ENCODE measurements at regions of chr20 and their contacts with region 1.

Region 1: GRCh38 chr20:18566892-18567742 is at the start of gene SMIM26:
- DNase-seq: peak; percentile 88 to 97 (median 95)
- ATAC-seq: peak; percentile 98
- H3K4me3 ChIP-seq: peak within 1 kb of the TSS; percentile 54 to 90
- H3K4me3 Mint-ChIP-seq: peak within 1 kb of the TSS; percentile 96
- H3K27ac ChIP-seq: peak within 1 kb of the TSS; percentile 79 to 94
- H3K27ac Mint-ChIP-seq: peak within 1 kb of the TSS; percentile 99
- H3K4me1 ChIP-seq: peaks cover 14% of the 10 kb centered on the region
- H3K4me1 Mint-ChIP-seq: peaks cover 22% of the 10 kb centered on the region
- H3K27me3 ChIP-seq: no peaks in the 10 kb centered on the region
- H3K27me3 Mint-ChIP-seq: no peaks in the 10 kb centered on the region
- CTCF ChIP-seq: no peak
- total RNA-seq, gene SMIM26: 63.9 to 64.8 TPM

Region 2: GRCh38 chr20:18466894-18467730 is 100.0 kb before region 1 on chr20 and contains the starts of genes DZANK1 and POLR3F:
- CTCF ChIA-PET with region 1: no interaction called
- POLR2A ChIA-PET with region 1: no interaction called
- intact Hi-C with region 1: loop called (anchors 1 to 2 kb)
- DNase-seq: peak; percentile 84 to 95 (median 93)
- ATAC-seq: peak; percentile 90
- H3K4me3 ChIP-seq: peak within 1 kb of the TSS; percentile 79 to 93
- H3K4me3 Mint-ChIP-seq: peak within 1 kb of the TSS; percentile 97
- H3K27ac ChIP-seq: peak within 1 kb of the TSS; percentile 73 to 92
- H3K27ac Mint-ChIP-seq: peak within 1 kb of the TSS; percentile 97
- H3K4me1 ChIP-seq: peaks cover 16% of the 10 kb centered on the region
- H3K4me1 Mint-ChIP-seq: peaks cover 24% of the 10 kb centered on the region
- H3K27me3 ChIP-seq: no peaks in the 10 kb centered on the region
- H3K27me3 Mint-ChIP-seq: no peaks in the 10 kb centered on the region
- CTCF ChIP-seq: no peak
- total RNA-seq, gene DZANK1: 2.0 to 2.3 TPM
- total RNA-seq, gene POLR3F: 11.5 TPM

Region 3: GRCh38 chr20:18507218-18508021 is 59.7 kb before region 1 on chr20 and contains the start of gene SEC23B:
- CTCF ChIA-PET with region 1: interaction called, 3 read pairs
- POLR2A ChIA-PET with region 1: interaction called, 15 read pairs
- intact Hi-C with region 1: loop called (anchors 1 kb)
- DNase-seq: peak; percentile 96 to 100 (median 98)
- ATAC-seq: peak; percentile 82
- H3K4me3 ChIP-seq: peak within 1 kb of the TSS; percentile 63 to 87
- H3K4me3 Mint-ChIP-seq: peak within 1 kb of the TSS; percentile 100
- H3K27ac ChIP-seq: peak within 1 kb of the TSS; percentile 97 to 100
- H3K27ac Mint-ChIP-seq: peak within 1 kb of the TSS; percentile 100
- H3K4me1 ChIP-seq: peaks cover 17% of the 10 kb centered on the region
- H3K4me1 Mint-ChIP-seq: peaks cover 47% of the 10 kb centered on the region
- H3K27me3 ChIP-seq: no peaks in the 10 kb centered on the region
- H3K27me3 Mint-ChIP-seq: no peaks in the 10 kb centered on the region
- CTCF ChIP-seq: no peak
- total RNA-seq, gene SEC23B: 31.5 to 31.8 TPM

Region 4: DNA sequence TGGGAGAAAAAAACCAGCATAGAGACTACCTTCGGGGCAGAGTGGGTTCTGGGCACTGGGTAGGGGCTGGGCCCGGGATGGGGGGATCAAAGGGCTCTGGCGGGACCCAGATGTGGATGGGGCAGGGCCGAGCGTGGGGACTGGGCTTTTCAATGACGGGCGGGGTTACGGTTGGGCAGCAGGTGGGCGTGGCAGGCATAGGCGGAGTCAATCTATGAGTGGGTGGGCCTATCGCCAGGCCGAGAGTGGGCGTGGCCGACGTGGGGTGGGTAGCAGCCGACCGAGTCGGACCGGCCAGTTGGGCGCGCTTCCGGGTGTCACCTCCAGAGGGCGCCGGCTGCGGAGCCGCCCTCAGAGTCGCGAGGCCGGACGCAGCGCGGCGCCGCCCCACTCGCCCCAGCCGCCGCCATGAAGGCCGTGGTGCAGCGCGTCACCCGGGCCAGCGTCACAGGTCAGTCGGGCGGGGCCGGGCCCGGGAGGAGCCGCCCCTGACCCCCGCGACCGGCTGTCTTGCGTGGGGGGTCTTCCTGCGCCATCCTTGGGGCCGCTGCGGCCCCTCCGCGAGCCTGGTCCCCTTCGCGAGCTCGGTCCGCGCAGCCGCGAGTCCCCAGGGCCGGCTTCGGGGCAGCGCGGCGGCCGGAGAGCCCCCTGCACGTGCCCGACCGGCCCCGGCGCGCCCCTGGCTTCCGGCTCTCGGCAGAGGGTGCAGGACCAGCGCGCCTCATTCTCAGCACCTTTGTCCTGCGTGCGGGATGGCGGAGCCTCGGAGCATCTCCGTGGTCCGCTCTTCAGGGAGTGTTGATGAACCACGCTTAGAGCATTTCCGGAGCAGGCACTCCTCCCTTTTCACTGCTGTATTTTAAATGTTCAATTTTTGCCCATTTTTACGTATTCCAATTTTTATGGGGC is 20.8 kb after region 1 on chr20 and contains the start of gene DTD1:
- CTCF ChIA-PET with region 1: interaction called, 3 read pairs
- POLR2A ChIA-PET with region 1: interaction called, 4 read pairs
- intact Hi-C with region 1: loop called (anchors 1 to 2 kb)
- DNase-seq: peak; percentile 53 to 89 (median 82)
- ATAC-seq: peak; percentile 82
- H3K4me3 ChIP-seq: peak within 1 kb of the TSS; percentile 65 to 83
- H3K4me3 Mint-ChIP-seq: peak within 1 kb of the TSS; percentile 95
- H3K27ac ChIP-seq: peak within 1 kb of the TSS; percentile 56 to 83
- H3K27ac Mint-ChIP-seq: peak within 1 kb of the TSS; percentile 94
- H3K4me1 ChIP-seq: peaks cover 18% of the 10 kb centered on the region
- H3K4me1 Mint-ChIP-seq: peaks cover 32% of the 10 kb centered on the region
- H3K27me3 ChIP-seq: no peaks in the 10 kb centered on the region
- H3K27me3 Mint-ChIP-seq: peaks cover 6% of the 10 kb centered on the region
- CTCF ChIP-seq: peak; percentile 45
- total RNA-seq, gene DTD1: 12.5 to 14.5 TPM

Region 5: DNA sequence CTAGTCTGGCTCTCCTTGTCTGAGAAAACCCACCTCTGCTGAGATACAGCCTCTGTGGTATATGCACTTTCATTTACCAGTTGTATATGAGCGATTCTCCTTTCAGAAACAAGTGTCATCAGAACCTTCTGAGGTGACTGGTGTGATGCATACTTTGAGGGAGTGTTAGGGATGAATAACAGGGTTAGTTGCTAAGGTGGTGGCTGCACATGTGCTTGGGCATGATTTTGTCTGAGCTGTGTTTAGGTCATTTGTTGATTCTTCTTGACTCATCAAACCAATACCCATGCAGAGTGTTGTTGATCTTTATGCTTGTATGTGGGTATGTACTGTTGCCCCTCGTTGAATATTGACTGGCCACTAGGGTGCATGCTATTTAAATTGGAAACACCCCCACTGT is 46.4 kb after region 1 on chr20:
- CTCF ChIA-PET with region 1: no interaction called
- POLR2A ChIA-PET with region 1: no interaction called
- intact Hi-C with region 1: no loop called
- DNase-seq: no peak
- ATAC-seq: no peak
- H3K4me3 ChIP-seq: no peak overlapping the region
- H3K4me3 Mint-ChIP-seq: no peak overlapping the region
- H3K27ac ChIP-seq: no peak overlapping the region
- H3K27ac Mint-ChIP-seq: no peak overlapping the region
- H3K4me1 ChIP-seq: no peaks in the 10 kb centered on the region
- H3K4me1 Mint-ChIP-seq: peaks cover 5% of the 10 kb centered on the region
- H3K27me3 ChIP-seq: no peaks in the 10 kb centered on the region
- H3K27me3 Mint-ChIP-seq: no peaks in the 10 kb centered on the region
- CTCF ChIP-seq: no peak

Region 6: GRCh38 chr20:20017001-20017843 is 1450.1 kb after region 1 on chr20 and contains the start of gene NAA20:
- CTCF ChIA-PET with region 1: no interaction called
- POLR2A ChIA-PET with region 1: no interaction called
- intact Hi-C with region 1: loop called in 1 of 2 experiments (anchors 5 kb)
- DNase-seq: peak; percentile 75 to 94 (median 91)
- ATAC-seq: peak; percentile 94
- H3K4me3 ChIP-seq: peak within 1 kb of the TSS; percentile 77 to 89
- H3K4me3 Mint-ChIP-seq: peak within 1 kb of the TSS; percentile 91
- H3K27ac ChIP-seq: peak within 1 kb of the TSS; percentile 63 to 82
- H3K27ac Mint-ChIP-seq: peak within 1 kb of the TSS; percentile 91
- H3K4me1 ChIP-seq: peaks cover 44% of the 10 kb centered on the region
- H3K4me1 Mint-ChIP-seq: peaks cover 53% of the 10 kb centered on the region
- H3K27me3 ChIP-seq: no peaks in the 10 kb centered on the region
- H3K27me3 Mint-ChIP-seq: no peaks in the 10 kb centered on the region
- CTCF ChIP-seq: peak; percentile 58
- total RNA-seq, gene NAA20: 32.9 to 33.2 TPM

Region 7: DNA sequence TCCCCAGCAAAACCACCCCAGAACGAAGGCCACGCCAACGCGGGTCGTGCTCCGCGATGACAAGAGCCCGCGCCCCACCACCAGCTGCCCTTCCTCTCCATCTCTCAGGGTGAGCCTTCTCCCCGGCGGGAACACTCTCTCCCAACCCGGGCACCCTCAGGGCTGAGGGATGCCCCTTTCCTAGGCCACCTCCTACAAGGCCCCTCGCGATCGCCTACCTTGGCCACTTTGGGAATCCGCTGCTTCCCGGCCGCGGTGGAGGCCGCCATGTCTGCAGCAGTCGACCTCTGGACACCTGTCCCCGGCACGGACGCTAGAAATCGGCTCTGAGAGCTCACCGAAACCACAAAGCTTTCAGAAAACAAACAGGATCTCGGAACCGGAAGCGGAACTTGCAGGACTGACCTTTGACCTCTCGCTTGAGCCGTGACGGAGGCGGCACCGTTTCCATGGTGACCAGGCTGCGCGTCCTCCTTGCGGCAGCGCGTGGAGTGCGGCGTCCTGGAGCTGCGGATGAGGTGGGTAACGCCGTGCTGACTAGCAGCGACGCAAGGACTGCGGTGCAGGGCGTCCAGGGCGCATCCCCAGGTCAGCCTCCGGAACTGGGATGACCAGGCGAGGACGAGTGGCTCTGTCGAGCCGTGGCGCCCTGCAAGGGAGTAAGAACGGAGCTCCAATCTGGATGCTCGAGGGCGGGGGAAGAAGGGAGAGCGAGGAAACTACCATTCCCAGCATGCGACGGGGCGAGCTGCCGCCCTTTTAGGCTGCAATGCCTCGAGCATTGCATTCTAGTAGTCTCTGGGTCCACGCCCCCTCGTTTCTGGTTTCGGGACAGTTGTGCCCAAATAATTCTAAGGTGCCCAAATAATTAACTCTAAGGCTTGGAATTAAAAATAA is 1485.2 kb after region 1 on chr20 and contains the starts of genes CFAP61 and CRNKL1:
- CTCF ChIA-PET with region 1: no interaction called
- POLR2A ChIA-PET with region 1: no interaction called
- intact Hi-C with region 1: loop called (anchors 1 to 2 kb)
- DNase-seq: peak; percentile 93 to 99 (median 98)
- ATAC-seq: peak; percentile 94
- H3K4me3 ChIP-seq: peak within 1 kb of the TSS; percentile 86 to 96
- H3K4me3 Mint-ChIP-seq: peak within 1 kb of the TSS; percentile 99
- H3K27ac ChIP-seq: peak within 1 kb of the TSS; percentile 86 to 92
- H3K27ac Mint-ChIP-seq: peak within 1 kb of the TSS; percentile 98
- H3K4me1 ChIP-seq: peaks cover 12% of the 10 kb centered on the region
- H3K4me1 Mint-ChIP-seq: peaks cover 29% of the 10 kb centered on the region
- H3K27me3 ChIP-seq: no peaks in the 10 kb centered on the region
- H3K27me3 Mint-ChIP-seq: peaks cover 10% of the 10 kb centered on the region
- CTCF ChIP-seq: no peak
- total RNA-seq, gene CFAP61: not detected
- total RNA-seq, gene CRNKL1: 34.1 to 39.7 TPM